Aorta (tissue), 5 donors: ENCODE measurements at regions of chr2 and their contacts with region 1.

Region 1: GRCh38 chr2:226661789-226662545 is 137.7 kb downstream of the IRS1 start:
- DNase-seq: peak in 1 of 2 donors; percentile 63
- ATAC-seq: peak; percentile 77
- H3K4me3 ChIP-seq: no peak overlapping the region
- H3K27ac ChIP-seq: peak overlapping the region; percentile 44 to 82
- H3K4me1 ChIP-seq: peaks cover 4 to 8% of the 10 kb centered on the region in 2 donors
- H3K27me3 ChIP-seq: no peaks in the 10 kb centered on the region

Region 2: DNA sequence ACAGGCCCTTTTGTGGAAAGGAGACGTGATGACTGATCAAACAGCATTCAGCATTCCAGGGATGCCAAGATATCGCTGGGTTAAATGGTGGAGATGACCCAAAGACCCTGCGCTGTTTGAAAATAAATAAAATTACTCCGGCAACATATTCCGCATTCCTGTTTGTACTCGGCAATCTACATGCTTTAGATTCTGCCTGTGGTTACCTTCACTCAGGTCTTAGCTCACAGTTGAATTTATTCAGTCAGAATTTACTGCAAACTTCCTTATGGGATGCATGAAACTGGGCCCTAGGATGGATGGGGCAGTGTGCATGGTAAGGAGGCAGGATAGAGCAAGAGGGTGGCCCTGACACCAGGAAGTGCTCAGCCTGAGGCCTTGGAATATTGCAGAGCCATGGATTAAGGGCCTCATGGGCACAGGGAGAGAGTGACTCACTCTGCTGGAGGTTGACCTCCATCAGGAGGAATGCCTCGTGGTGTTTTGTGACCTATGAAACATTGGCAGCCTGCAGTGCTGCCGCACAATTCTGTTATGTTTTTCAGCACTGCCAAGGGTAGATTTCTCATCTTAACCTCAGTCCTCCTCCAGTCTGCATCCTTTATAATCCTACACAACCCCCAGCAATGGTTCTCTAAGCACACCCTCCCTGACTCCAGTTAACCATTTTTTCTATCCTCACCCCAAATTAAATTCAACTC is 183.7 kb before region 1 on chr2:
- intact Hi-C with region 1: loop called in 1 of 2 experiments (anchors 2 kb)
- DNase-seq: peak; percentile 72 to 73
- ATAC-seq: peak; percentile 91
- H3K4me3 ChIP-seq: no peak overlapping the region
- H3K27ac ChIP-seq: peak overlapping the region; percentile 74 to 96
- H3K4me1 ChIP-seq: peaks cover 1 to 3% of the 10 kb centered on the region in 2 donors
- H3K27me3 ChIP-seq: no peaks in the 10 kb centered on the region

Region 3: DNA sequence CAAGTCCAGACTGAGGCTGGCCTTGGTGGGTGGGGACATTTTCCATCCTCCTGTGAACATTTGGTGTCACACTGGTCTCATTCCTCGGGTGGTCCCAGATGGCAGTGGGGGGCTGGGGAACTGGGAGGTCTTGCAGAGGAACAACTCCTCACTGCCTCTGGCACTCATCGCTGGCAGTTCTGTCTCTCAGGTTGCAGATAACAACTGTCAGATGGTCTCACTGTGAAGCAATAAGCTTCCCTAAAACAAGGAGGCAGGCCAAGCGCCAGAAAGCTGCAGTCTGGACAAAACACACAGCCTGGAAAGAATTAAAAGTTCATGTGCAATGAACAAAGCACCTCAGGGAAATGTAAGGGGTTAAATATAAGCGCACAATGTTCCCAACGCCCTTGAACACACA is 59.6 kb after region 1 on chr2:
- intact Hi-C with region 1: loop called in 1 of 2 experiments (anchors 5 kb)
- DNase-seq: peak in 1 of 2 donors; percentile 45
- ATAC-seq: no peak
- H3K4me3 ChIP-seq: no peak overlapping the region
- H3K27ac ChIP-seq: no peak overlapping the region
- H3K4me1 ChIP-seq: no peaks in the 10 kb centered on the region
- H3K27me3 ChIP-seq: no peaks in the 10 kb centered on the region

Region 4: DNA sequence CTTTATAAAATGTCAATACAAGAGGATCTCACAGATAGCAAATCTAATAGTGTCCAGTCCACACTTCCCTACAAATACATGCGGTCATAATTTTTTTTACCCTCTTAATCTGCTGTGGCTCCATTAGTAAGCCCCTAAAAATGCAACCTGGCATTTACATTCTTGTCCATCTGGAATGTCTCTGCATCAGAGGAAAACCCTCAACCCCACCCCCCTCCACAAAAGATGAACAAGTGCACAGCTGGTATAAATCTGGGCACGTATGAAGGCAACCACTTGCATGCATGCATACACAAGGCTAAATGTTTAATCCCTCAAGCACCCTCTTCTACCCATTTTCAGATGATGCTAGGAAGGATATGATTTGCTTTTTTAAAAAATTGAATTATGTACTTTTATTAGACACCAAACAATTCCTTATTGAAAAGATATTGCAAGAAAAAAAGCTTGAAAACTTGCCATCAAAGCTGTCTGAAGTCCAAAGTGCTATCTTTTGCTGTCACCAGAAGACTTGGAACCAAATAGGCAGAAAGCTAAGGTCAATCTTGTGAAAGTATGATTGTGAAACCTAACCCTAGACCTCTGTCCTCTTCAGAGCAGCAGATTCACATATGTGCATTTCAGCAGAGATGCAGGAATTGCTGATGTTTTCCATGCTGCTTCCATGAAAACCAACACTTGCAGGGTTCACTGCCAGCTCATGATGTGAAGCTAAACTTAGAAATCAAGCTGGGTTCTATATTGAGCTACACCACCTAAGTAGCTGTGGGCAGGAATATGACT is 98.6 kb after region 1 on chr2:
- intact Hi-C with region 1: loop called in 1 of 2 experiments (anchors 10 kb)
- DNase-seq: no peak
- ATAC-seq: no peak
- H3K4me3 ChIP-seq: no peak overlapping the region
- H3K27ac ChIP-seq: no peak overlapping the region
- H3K4me1 ChIP-seq: peaks cover 8 to 30% of the 10 kb centered on the region in 2 donors
- H3K27me3 ChIP-seq: no peaks in the 10 kb centered on the region

Region 5: GRCh38 chr2:226791487-226792081 is 129.6 kb after region 1 on chr2:
- intact Hi-C with region 1: loop called (anchors 5 kb)
- DNase-seq: peak; percentile 95 to 96
- ATAC-seq: peak; percentile 96
- H3K4me3 ChIP-seq: peak overlapping the region; percentile 33 to 76
- H3K27ac ChIP-seq: peak overlapping the region; percentile 94 to 97
- H3K4me1 ChIP-seq: peaks cover 0 to 5% of the 10 kb centered on the region in 2 donors
- H3K27me3 ChIP-seq: no peaks in the 10 kb centered on the region

Region 6: GRCh38 chr2:226943862-226944620 is 282.1 kb after region 1 on chr2:
- intact Hi-C with region 1: no loop called
- DNase-seq: no peak
- ATAC-seq: no peak
- H3K4me3 ChIP-seq: no peak overlapping the region
- H3K27ac ChIP-seq: no peak overlapping the region
- H3K4me1 ChIP-seq: no peaks in the 10 kb centered on the region
- H3K27me3 ChIP-seq: no peaks in the 10 kb centered on the region